Panc1 (cell line): ENCODE measurements at regions of chr14 and their contacts with region 1.

Region 1: GRCh38 chr14:101826351-101826750 is 64.8 kb downstream of the PPP2R5C start:
- DNase-seq: no peak
- ATAC-seq: no peak
- H3K4me3 ChIP-seq: no peak overlapping the region
- H3K27ac ChIP-seq: no peak overlapping the region
- H3K4me1 ChIP-seq: no peaks in the 10 kb centered on the region
- H3K27me3 ChIP-seq: no peaks in the 10 kb centered on the region
- CTCF ChIP-seq: no peak

Region 2: GRCh38 chr14:101879529-101880336 is 53.4 kb after region 1 on chr14:
- CTCF ChIA-PET with region 1: no interaction called
- POLR2A ChIA-PET with region 1: no interaction called
- in situ Hi-C with region 1: no loop called
- intact Hi-C with region 1: no loop called
- DNase-seq: no peak
- ATAC-seq: no peak
- H3K4me3 ChIP-seq: no peak overlapping the region
- H3K27ac ChIP-seq: no peak overlapping the region
- H3K4me1 ChIP-seq: no peaks in the 10 kb centered on the region; the same call in none of the 2 replicates
- H3K27me3 ChIP-seq: no peaks in the 10 kb centered on the region
- CTCF ChIP-seq: no peak

Region 3: DNA sequence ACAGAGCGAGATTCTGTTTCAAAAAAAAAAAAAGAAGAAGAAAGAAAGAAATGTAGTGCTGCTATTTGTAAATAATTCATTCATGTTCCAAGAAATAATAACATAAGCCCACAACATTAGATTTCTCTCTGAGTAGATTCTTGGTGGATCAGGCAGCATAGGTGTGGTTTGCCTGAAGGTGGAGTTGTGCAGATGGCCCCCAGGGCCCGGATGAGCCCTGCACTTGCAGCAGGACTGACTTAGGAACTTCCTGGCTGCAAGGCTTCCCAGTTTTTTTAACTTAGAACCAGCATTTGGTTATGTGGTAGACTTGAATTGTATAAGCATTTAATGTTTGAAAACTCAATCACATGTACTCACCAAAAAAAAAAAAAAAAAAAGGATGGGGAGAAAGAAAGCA is 627.1 kb after region 1 on chr14:
- CTCF ChIA-PET with region 1: no interaction called
- POLR2A ChIA-PET with region 1: interaction called, 17 read pairs
- in situ Hi-C with region 1: no loop called
- intact Hi-C with region 1: no loop called
- DNase-seq: no peak
- ATAC-seq: no peak
- H3K4me3 ChIP-seq: no peak overlapping the region
- H3K27ac ChIP-seq: no peak overlapping the region
- H3K4me1 ChIP-seq: no peaks in the 10 kb centered on the region
- H3K27me3 ChIP-seq: no peaks in the 10 kb centered on the region
- CTCF ChIP-seq: no peak